Esophagus muscularis mucosa (tissue), 4 donors: ENCODE measurements at regions of chr12 and their contacts with region 1.

Region 1: DNA sequence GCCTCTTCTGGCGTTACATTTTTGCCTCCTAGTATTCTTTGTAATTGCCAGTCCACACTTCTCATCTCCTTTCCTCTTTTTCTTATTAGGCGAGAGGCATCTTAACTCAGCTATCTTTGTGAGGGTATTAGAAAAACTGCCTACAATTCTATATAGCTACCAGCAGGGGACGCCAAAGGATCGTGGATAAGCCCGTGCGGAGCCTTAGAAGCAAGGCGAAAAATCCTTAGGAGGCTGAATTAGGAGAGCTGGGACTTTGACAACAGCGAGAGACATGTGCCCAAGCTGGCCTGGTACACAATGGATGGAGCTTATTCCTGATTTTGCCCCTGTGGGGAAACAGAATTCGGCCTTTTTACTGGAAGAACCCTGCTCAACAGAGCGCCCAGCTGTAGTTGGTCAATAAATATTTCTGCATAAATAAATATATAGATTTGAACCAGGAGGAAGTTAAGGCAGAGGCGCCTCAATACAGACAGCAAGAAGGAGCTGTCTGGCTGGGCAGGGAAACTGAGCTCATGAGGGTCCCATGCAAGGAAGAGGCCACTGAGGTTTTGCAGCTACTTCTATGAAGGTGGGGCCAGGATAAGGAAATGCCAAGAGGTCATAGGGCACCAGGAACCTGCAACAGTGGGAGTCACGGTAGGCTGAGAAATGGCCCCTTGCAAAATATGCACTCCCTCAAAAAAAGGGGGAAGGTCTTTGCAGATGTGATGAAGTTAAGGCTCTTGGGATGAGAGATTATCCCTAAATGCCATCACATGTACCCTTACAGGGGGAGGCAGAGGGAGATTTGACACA is 14.6 kb upstream of the RBM19 start:
- DNase-seq: no peak
- H3K4me3 ChIP-seq: no peak overlapping the region
- H3K27ac ChIP-seq: no peak overlapping the region
- H3K4me1 ChIP-seq: no peaks in the 10 kb centered on the region
- H3K27me3 ChIP-seq: peaks cover 0 to 65% (median 5%) of the 10 kb centered on the region in 4 donors
- CTCF ChIP-seq: peak; percentile 89 to 93 (median 90)
- EP300 ChIP-seq: no peak
- POLR2A ChIP-seq: no peak

Region 2: DNA sequence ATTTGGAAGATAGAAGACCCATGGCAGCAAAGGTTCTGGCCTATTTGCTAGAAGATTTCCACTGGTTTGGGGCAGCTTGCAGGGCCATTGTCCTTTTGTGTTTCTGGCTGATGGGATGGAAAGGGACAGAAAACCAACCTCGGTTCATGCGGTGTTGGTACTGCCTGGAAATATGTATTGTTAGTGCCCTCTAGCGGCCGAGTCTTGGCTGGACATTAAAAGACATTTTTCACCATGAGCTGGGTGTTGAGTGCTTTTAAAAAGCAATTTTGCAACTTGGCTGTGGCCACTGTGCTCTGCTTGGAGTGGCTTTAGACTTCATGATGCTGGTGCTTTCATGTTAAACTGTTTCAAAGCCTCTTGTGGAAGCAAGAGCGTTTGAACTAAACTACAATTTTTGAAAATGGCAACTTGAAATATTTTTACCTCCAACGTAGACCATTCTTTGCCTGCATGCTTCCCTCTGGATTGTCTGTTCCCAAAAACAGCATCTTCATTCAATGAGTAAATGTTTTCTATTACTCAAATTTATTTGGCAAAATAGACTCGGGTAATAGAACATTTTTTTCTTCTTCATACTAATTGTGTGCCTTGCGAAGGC is 527.9 kb after region 1 on chr12:
- intact Hi-C with region 1: loop called (anchors 2 kb)
- DNase-seq: peak; percentile 97
- H3K4me3 ChIP-seq: no peak overlapping the region
- H3K27ac ChIP-seq: no peak overlapping the region
- H3K4me1 ChIP-seq: no peaks in the 10 kb centered on the region
- H3K27me3 ChIP-seq: peaks cover 0 to 39% (median 8%) of the 10 kb centered on the region in 4 donors
- CTCF ChIP-seq: peak; percentile 75 to 80 (median 77)
- EP300 ChIP-seq: no peak
- POLR2A ChIP-seq: no peak